HepG2 (cell line): ENCODE measurements at regions of chr14 and their contacts with region 1.

Region 1: DNA sequence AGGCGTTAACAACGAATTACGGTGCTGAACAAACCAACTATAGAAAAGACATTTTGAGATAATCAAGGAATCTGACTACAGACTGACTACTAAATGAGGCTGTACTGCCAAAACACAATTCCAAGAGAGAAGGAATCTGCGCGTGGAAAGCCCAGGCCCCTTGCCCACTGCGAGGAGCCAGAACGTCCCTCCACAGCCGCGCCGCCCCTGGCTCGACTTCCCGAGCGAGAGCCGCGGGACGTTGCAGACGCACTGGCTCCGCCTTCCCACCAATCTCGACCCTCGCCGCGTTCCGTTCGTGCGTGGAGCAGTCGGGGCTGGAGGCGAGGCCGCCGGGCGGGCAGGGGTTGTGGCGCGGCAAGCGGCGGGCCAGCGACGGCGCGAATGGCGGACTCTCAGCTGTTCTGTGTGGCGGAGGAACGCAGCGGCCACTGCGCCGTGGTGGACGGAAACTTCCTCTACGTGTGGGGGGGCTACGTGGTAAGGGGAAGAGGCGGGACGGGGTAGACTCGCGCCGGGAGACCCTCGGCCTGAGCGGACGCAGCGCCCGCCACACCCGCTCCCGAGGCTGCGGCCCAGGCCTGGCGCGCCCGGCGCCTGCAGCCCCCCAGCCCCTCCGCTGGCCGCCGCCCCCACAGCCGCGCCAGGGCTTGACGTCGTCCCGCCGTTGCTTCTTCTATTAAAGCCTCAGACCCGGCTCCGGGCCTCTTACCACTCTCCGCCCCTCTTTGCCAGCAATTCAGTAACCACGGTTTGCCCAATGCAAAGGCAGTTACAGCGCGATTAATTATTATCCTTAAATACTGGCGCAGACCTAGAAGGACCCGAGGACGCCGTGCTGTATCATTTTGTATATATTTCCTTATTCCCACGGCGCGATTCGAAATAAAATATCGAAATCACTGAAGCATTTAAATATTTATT is at the start of gene KLHDC1:
- DNase-seq: peak; percentile 66
- ATAC-seq: peak; percentile 83
- H3K4me3 ChIP-seq: peak within 1 kb of the TSS; percentile 67 to 88 (median 75)
- H3K27ac ChIP-seq: peak within 1 kb of the TSS; percentile 77
- H3K4me1 ChIP-seq: peaks cover 39% of the 10 kb centered on the region
- H3K27me3 ChIP-seq: no peaks in the 10 kb centered on the region; a peak in 1 of 5 replicates
- CTCF ChIP-seq: peak; percentile 35; the same call in 1 of the 2 replicates
- EP300 ChIP-seq: no peak
- POLR2A ChIP-seq: peak; percentile 50 to 70; a peak in 3 of 4 replicates
- RAD21 ChIP-seq: 0 out of 2 replicates have a peak, but pooled peaks have one; percentile 31
- total RNA-seq, gene KLHDC1: 0.11 TPM in 1 of 2 replicates, not detected in the other

Region 2: GRCh38 chr14:49641697-49642129 is 51.4 kb before region 1 on chr14:
- CTCF ChIA-PET with region 1: no interaction called
- POLR2A ChIA-PET with region 1: interaction called, 4 read pairs
- in situ Hi-C with region 1: no loop called
- intact Hi-C with region 1: loop called (anchors 5 kb)
- DNase-seq: peak; percentile 96
- ATAC-seq: peak; percentile 98
- H3K4me3 ChIP-seq: peak overlapping the region in 2 of 3 experiments; percentile 7 to 13; a peak in 2 of 6 replicates
- H3K27ac ChIP-seq: peak overlapping the region; percentile 70
- H3K4me1 ChIP-seq: peaks cover 57% of the 10 kb centered on the region
- H3K27me3 ChIP-seq: no peaks in the 10 kb centered on the region
- CTCF ChIP-seq: no peak
- EP300 ChIP-seq: peak in 1 of 2 experiments; percentile 85; a peak in 2 of 4 replicates
- POLR2A ChIP-seq: peak in 1 of 2 experiments; percentile 40; a peak in 1 of 4 replicates
- RAD21 ChIP-seq: no peak

Region 3: GRCh38 chr14:49778421-49778820 is 85.3 kb after region 1 on chr14:
- CTCF ChIA-PET with region 1: no interaction called
- POLR2A ChIA-PET with region 1: no interaction called
- in situ Hi-C with region 1: no loop called
- intact Hi-C with region 1: no loop called
- DNase-seq: no peak
- ATAC-seq: no peak
- H3K4me3 ChIP-seq: no peak overlapping the region
- H3K27ac ChIP-seq: no peak overlapping the region
- H3K4me1 ChIP-seq: peaks cover 9% of the 10 kb centered on the region
- H3K27me3 ChIP-seq: no peaks in the 10 kb centered on the region
- CTCF ChIP-seq: no peak
- EP300 ChIP-seq: no peak
- POLR2A ChIP-seq: no peak
- RAD21 ChIP-seq: no peak